Mammary epithelial cell (primary cell): ENCODE measurements at regions of chr17 and their contacts with region 1.

Region 1: GRCh38 chr17:19992803-19993713 is 15.4 kb upstream of the AKAP10 start:
- DNase-seq: peak; percentile 76
- H3K4me3 ChIP-seq: no peak overlapping the region
- H3K27ac ChIP-seq: no peak overlapping the region
- H3K4me1 ChIP-seq: no peaks in the 10 kb centered on the region
- H3K27me3 ChIP-seq: no peaks in the 10 kb centered on the region
- CTCF ChIP-seq: peak; percentile 57 to 75

Region 2: DNA sequence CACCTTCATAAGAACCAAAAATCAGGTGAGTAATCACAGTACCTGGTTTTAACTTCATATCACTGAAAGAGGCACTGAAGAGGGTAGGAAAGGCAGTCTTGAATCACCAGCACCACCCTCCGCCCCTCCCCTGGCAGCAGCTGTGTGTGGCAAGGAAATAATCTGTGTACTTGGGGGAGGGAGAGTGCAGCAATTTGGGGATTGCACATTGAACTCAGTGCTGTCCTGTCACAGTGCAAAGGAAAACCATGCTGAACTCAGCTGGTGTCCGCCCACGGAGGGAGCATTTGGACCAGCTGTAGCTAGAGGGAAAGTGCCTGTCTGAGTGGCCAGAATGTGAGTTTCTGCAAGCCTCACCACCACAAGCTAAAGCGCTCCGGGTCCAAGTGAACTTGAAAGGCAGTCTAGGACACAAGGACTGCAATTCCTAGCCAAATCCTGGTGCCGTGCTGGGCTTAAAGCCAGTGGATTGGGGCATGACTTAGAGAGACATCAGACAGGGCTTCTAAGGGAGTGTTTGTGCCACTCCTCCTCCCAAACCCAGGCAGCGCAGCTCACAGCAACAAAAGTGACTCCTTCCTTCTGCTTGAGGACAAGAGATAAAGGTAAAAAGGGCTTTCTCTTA is 205.2 kb before region 1 on chr17:
- CTCF ChIA-PET with region 1: no interaction called
- dilution Hi-C with region 1: no loop called
- in situ Hi-C with region 1: no loop called
- intact Hi-C with region 1: no loop called
- DNase-seq: peak; percentile 6
- H3K4me3 ChIP-seq: no peak overlapping the region
- H3K27ac ChIP-seq: no peak overlapping the region
- H3K4me1 ChIP-seq: no peaks in the 10 kb centered on the region
- H3K27me3 ChIP-seq: no peaks in the 10 kb centered on the region
- CTCF ChIP-seq: no peak

Region 3: GRCh38 chr17:20009302-20010098 is 16.4 kb after region 1 on chr17 and contains the start of gene SPECC1:
- CTCF ChIA-PET with region 1: interaction called, 4 read pairs
- dilution Hi-C with region 1: no loop called
- in situ Hi-C with region 1: no loop called
- intact Hi-C with region 1: loop called (anchors 1 kb)
- DNase-seq: peak; percentile 69
- H3K4me3 ChIP-seq: peak within 1 kb of the TSS; percentile 64 to 82 (median 75)
- H3K27ac ChIP-seq: no peak within 1 kb of the TSS
- H3K4me1 ChIP-seq: peaks cover 16% of the 10 kb centered on the region
- H3K27me3 ChIP-seq: peaks cover 2% of the 10 kb centered on the region
- CTCF ChIP-seq: peak in 1 of 2 donors; percentile 83
- total RNA-seq, gene SPECC1: 67.1 to 122 TPM

Region 4: GRCh38 chr17:20114466-20114865 is 121.4 kb after region 1 on chr17:
- CTCF ChIA-PET with region 1: interaction called, 4 read pairs
- dilution Hi-C with region 1: no loop called
- in situ Hi-C with region 1: loop called (anchors 5 kb)
- intact Hi-C with region 1: loop called (anchors 1 kb)
- DNase-seq: no peak
- H3K4me3 ChIP-seq: no peak overlapping the region
- H3K27ac ChIP-seq: no peak overlapping the region
- H3K4me1 ChIP-seq: no peaks in the 10 kb centered on the region
- H3K27me3 ChIP-seq: no peaks in the 10 kb centered on the region
- CTCF ChIP-seq: no peak

Region 5: GRCh38 chr17:20121359-20122253 is 128.5 kb after region 1 on chr17:
- CTCF ChIA-PET with region 1: interaction called, 4 read pairs
- dilution Hi-C with region 1: loop called (anchors 5 kb)
- in situ Hi-C with region 1: no loop called
- intact Hi-C with region 1: loop called (anchors 1 kb)
- DNase-seq: peak; percentile 34
- H3K4me3 ChIP-seq: no peak overlapping the region
- H3K27ac ChIP-seq: no peak overlapping the region
- H3K4me1 ChIP-seq: peaks cover 5% of the 10 kb centered on the region
- H3K27me3 ChIP-seq: no peaks in the 10 kb centered on the region
- CTCF ChIP-seq: peak; percentile 81 to 94

Region 6: DNA sequence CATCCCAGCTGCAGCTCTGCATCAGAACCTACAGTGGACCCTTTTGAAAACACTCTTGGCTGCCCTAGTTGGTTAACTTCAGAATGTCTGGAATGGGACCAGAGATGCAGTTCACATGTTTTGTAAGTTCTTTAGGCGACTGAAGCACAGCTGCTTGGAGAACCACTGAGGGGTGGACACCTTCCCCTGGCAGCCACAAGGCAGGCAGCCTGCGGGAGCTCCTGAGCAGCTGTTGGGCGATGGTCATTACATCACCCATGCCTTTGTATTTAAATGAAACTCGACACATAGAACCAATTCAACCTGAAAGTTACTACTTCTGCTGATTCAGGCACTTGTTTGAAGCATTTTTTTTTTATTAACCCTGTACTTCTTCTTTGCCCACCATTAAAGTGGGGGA is 322.8 kb after region 1 on chr17:
- CTCF ChIA-PET with region 1: no interaction called
- dilution Hi-C with region 1: no loop called
- in situ Hi-C with region 1: loop called in 1 of 2 experiments (anchors 10 kb)
- intact Hi-C with region 1: loop called (anchors 5 kb)
- DNase-seq: no peak
- H3K4me3 ChIP-seq: no peak overlapping the region
- H3K27ac ChIP-seq: no peak overlapping the region
- H3K4me1 ChIP-seq: no peaks in the 10 kb centered on the region
- H3K27me3 ChIP-seq: no peaks in the 10 kb centered on the region
- CTCF ChIP-seq: no peak